ENCODE measurements at regions of chr19 and their contacts with region 1.

Region 1: GRCh38 chr19:58519355-58520256 is at the start of gene ZBTB45:
- DNase-seq: peak; percentile 90
- H3K4me3 Mint-ChIP-seq: peak within 1 kb of the TSS; percentile 99
- H3K27ac Mint-ChIP-seq: peak within 1 kb of the TSS; percentile 98
- H3K4me1 Mint-ChIP-seq: peaks cover 29% of the 10 kb centered on the region
- H3K27me3 Mint-ChIP-seq: no peaks in the 10 kb centered on the region
- total RNA-seq, gene ZBTB45: 16.6 and 17.7 TPM in 2 replicates

Region 2: DNA sequence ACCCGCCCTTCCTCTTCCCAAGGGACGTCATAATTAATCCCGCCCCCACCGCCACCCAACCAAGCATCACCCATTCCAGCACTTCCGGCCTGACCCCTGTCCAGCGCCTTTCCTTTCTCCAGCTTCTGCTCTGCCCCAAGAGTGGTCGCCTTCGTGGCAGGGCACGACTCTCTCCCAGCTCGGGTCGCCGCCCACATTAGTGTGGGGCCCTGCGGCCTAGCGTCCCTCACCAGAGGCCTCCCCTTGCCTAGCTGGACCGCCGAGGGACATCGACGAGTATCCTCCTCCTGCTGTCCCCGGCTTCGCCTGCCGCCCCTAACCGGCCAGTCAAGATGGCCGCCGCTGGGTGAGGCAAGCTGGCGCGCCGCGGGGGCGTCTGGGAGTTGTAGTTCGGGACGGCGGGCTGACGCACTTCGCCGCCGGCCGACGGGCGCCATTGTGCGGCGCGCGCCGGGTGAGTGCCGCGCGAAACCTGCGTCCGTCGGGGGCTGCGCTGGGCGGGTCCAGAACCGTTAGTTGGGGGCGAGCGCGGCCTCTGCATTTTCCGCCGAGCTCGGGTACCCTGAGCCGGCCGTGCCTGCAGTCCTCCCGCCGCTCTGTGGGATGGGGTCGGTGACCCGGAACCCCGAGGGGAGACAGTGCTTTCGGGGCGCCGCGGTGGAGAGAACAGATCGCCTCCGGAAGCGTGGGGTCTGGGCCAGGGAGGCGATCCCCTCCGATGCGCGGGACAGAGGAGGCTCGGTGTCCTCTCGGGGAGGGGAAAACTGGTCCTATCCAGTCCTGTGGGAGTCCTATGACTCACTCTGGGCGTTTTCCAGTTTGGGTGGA is 336.4 kb before region 1 on chr19 and contains the start of gene ZNF274:
- intact Hi-C with region 1: loop called (anchors 1 kb)
- DNase-seq: peak; percentile 88
- H3K4me3 Mint-ChIP-seq: peak within 1 kb of the TSS; percentile 89
- H3K27ac Mint-ChIP-seq: peak within 1 kb of the TSS; percentile 94
- H3K4me1 Mint-ChIP-seq: peaks cover 8% of the 10 kb centered on the region
- H3K27me3 Mint-ChIP-seq: no peaks in the 10 kb centered on the region
- total RNA-seq, gene ZNF274: 18.4 and 19.9 TPM in 2 replicates

Region 3: DNA sequence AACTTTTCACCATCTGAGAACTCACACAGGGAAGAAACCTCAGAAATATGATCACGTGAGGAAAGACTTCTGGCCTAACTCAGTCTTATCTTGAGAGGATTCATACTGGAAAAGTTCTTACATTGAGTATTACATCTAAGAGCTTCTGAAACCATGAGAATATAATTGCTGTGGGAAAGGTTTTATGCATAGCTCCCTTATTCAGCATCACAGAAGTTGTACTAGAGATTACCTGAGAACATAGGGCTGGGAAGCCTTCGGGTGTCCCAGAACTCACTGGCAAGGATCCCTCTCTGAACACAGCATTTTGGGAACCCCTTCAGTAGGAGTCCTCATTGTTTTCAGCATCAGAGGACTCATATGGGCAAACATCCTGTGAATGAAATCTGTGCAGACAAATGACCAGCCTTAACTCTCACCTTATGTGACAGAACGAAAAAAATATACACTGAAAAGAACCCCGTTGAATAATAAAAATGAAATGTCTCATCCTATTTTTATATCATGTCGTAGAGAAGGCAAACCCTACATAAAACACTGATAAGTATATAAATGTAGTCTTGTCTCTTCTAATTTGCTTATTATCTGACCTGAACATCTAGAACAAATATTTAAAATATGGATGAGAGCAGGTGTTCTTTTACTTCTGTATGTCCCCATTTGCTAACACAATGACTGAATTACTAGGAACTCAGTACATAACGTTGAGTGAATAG is 322.5 kb before region 1 on chr19:
- intact Hi-C with region 1: no loop called
- DNase-seq: no peak
- H3K4me3 Mint-ChIP-seq: no peak overlapping the region
- H3K27ac Mint-ChIP-seq: no peak overlapping the region
- H3K4me1 Mint-ChIP-seq: no peaks in the 10 kb centered on the region
- H3K27me3 Mint-ChIP-seq: no peaks in the 10 kb centered on the region

Region 4: GRCh38 chr19:58386576-58387337 is 132.8 kb before region 1 on chr19 and contains the start of gene RPS5:
- intact Hi-C with region 1: loop called (anchors 2 kb)
- DNase-seq: peak; percentile 96
- H3K4me3 Mint-ChIP-seq: peak within 1 kb of the TSS; percentile 96
- H3K27ac Mint-ChIP-seq: peak within 1 kb of the TSS; percentile 94
- H3K4me1 Mint-ChIP-seq: peaks cover 29% of the 10 kb centered on the region
- H3K27me3 Mint-ChIP-seq: no peaks in the 10 kb centered on the region
- total RNA-seq, gene RPS5: 1,217 and 1,244 TPM in 2 replicates

Region 5: DNA sequence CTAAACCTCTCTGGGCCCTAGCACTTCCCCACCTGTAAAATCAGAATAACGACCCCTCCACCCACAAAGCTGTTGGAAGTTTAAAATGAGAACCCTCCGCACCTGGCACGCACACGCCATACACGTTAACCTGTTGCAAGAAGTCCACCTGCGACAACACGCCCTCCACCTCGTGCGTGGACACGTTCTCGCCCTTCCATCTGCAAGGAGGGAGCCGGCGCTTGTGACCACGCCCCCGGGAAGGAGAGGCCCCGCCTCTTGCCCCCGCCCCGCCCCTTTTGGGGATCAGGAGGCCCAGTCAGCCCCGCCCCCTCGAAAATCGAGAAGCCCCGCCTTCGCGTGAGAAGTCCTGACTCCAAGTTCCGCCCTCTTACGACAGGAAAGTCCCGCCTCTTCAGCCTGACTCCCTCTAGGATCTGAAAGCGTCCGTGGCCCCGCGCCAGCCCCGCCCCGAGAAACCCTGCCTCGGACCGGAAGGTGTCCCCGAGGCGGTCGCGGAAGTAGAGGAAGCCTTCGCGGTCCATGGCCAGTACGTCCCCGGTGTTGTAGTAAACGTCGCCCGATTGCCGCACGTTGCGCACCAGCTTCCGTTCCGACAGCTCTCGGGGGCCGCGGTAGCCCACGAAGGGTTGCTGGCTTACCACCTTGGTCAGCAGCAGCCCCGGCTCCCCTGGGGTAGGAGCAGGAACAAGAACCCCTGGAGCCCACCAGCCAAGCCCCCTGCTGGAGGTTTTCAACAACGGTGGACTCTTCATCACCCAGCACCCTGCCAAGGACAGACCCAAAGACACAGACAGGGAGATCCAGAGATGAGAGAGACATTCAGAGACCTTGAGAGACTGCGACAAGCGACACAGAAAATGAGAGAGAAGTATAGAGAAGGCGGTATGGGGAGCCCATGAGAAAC is 20.3 kb before region 1 on chr19:
- intact Hi-C with region 1: loop called (anchors 1 kb)
- DNase-seq: peak; percentile 96
- H3K4me3 Mint-ChIP-seq: peak overlapping the region; percentile 99
- H3K27ac Mint-ChIP-seq: peak overlapping the region; percentile 97
- H3K4me1 Mint-ChIP-seq: peaks cover 21% of the 10 kb centered on the region
- H3K27me3 Mint-ChIP-seq: no peaks in the 10 kb centered on the region

Region 6: DNA sequence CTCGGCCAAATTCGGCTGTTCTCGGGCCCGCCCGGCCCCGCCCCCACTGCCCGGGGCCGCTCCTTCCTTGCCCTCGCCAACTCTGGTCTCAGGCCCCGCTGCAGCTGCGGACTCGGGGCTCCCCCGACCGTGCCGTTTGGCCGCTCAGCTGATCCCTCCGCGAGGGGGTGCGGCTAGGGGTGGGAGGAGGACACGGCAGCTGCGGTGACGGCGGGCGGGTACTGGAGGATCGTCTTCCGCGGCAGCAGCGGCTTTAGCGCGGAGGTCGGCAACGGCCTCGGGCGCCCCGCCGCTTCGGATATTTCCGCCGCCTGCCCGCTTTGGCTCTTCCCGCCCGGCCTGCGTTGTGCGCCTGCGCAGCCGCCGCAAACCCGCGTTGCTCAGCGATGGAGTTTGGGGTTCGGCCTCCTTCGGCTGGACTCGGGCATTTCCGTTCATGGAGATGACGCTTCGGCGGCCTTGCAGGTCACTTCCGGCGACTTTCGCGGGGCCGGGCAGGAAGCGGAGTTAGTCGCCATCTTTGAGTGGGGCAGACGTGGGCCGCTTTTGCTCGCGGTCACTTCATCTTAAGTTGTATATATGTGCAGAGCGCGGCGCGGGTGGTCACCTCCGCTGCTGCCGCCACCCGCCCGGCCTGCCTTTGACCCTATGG is 39.1 kb after region 1 on chr19:
- intact Hi-C with region 1: loop called (anchors 1 kb)
- DNase-seq: peak; percentile 100
- H3K4me3 Mint-ChIP-seq: peak overlapping the region; percentile 94
- H3K27ac Mint-ChIP-seq: peak overlapping the region; percentile 99
- H3K4me1 Mint-ChIP-seq: peaks cover 48% of the 10 kb centered on the region
- H3K27me3 Mint-ChIP-seq: no peaks in the 10 kb centered on the region

Measured in activated T-helper 2 cell treated with anti-CD3 and anti-CD28 coated beads, Interferon-gamma antibody, Interleukin-2, Interleukin-4, amounts not matched to agents 10 μg/mL and 5 μg/mL and 100 μg/mL, durations not matched to agents 14 hours and 24 hours and 36 hours (primary cell).